Activated CD8-positive, alpha-beta T cell treated with anti-CD3 and anti-CD28 coated beads, Interleukin-2, amount 10 ng/mL, durations not matched to agents 7 days and 5 days (primary cell): ENCODE measurements at regions of chr5 and their contacts with region 1.

Region 1: DNA sequence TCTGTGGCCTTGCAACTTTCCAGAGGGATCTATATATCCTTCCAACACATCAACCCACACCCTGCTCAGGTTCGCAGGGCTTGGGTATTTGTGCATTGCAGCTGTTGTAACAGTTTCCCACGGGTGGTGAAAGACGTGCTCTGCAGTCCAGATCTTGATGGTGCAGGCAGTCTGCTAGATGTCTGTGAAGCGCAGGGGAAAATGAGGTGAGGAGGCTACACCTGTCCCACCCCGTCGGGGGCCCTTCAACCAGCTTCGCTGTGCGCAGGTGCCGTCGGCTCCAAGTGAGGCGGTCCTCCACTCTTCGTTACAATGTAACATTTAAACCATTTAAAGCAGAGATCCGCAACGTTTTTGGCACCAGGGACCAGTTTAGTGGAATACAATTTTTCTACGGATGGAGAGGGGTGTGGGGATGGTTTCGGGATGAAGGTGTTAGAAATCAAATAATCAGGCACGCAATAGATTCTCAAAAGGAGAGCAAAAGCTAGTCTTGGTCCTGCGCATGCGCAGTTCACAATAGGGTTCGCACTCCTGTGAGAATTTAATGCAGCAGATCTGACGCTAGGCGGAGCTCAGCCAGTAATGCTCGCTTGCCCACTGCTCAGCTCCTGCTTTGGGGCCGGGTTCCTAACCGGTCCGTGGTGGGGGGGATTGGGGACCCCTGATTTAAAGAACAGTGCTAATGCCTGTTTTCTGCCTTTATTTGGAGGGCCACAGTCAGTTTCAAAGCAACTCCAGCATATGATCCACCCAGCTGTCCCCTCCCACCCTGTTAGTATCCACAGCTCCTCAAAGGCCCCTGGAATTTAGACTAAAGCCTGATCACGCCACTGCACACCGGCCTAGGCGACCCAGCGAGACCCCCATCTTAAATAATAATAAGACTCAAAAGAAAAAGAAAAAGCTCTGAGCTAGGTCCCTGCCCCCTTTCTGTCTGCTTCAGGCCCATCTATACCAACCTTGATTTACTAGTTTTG is 97.1 kb upstream of the SELENOP start:
- DNase-seq: peak; percentile 95
- ATAC-seq: peak; percentile 94
- H3K4me3 Mint-ChIP-seq: peak overlapping the region; percentile 89
- H3K27ac Mint-ChIP-seq: peak overlapping the region; percentile 82
- H3K4me1 Mint-ChIP-seq: peaks cover 18% of the 10 kb centered on the region
- H3K27me3 Mint-ChIP-seq: peaks cover 28% of the 10 kb centered on the region

Region 2: DNA sequence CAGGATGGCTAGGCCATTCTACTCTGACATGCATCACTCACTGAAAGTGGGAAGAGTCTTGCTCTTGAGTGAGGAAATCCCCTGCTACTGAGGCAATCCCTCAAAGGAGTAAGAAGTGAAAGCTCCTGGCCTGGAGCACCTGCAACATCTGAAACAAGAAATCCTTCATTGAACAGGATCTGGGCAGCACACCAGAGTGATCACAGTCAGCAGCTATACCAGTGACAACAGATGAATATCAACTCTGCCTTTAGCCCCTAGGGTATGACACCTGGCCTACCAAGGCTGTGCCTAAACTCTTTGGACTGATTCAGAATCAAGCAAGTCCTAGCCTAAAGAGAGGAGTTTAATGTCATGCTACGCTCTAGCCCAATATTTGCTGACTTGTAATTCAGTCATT is 308.4 kb before region 1 on chr5:
- CTCF ChIA-PET with region 1: no interaction called
- POLR2A ChIA-PET with region 1: no interaction called
- DNase-seq: no peak
- ATAC-seq: no peak
- H3K4me3 Mint-ChIP-seq: no peak overlapping the region
- H3K27ac Mint-ChIP-seq: no peak overlapping the region
- H3K4me1 Mint-ChIP-seq: no peaks in the 10 kb centered on the region
- H3K27me3 Mint-ChIP-seq: no peaks in the 10 kb centered on the region

Region 3: DNA sequence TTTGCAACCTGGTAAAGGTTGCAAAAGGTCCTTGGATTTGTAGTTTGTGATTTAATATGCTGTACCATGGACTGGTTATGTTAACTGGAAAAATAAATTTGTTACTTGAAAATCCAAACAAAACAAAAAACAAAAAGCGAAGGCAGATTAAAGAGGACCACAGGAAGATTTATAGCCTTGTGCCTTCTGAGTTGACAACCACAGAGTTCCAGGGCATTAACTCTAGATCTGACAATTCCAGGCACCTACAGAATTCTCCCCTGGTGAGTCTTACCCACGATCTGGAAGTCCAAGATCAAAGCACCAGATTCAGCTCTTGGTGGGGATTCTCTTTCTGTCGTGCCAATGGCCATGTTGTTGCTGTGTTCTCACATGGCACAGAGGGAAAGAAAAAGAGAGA is 10.8 kb after region 1 on chr5:
- CTCF ChIA-PET with region 1: interaction called, 12 read pairs
- POLR2A ChIA-PET with region 1: no interaction called
- DNase-seq: no peak
- ATAC-seq: no peak
- H3K4me3 Mint-ChIP-seq: no peak overlapping the region
- H3K27ac Mint-ChIP-seq: no peak overlapping the region
- H3K4me1 Mint-ChIP-seq: no peaks in the 10 kb centered on the region
- H3K27me3 Mint-ChIP-seq: peaks cover 1% of the 10 kb centered on the region

Region 4: DNA sequence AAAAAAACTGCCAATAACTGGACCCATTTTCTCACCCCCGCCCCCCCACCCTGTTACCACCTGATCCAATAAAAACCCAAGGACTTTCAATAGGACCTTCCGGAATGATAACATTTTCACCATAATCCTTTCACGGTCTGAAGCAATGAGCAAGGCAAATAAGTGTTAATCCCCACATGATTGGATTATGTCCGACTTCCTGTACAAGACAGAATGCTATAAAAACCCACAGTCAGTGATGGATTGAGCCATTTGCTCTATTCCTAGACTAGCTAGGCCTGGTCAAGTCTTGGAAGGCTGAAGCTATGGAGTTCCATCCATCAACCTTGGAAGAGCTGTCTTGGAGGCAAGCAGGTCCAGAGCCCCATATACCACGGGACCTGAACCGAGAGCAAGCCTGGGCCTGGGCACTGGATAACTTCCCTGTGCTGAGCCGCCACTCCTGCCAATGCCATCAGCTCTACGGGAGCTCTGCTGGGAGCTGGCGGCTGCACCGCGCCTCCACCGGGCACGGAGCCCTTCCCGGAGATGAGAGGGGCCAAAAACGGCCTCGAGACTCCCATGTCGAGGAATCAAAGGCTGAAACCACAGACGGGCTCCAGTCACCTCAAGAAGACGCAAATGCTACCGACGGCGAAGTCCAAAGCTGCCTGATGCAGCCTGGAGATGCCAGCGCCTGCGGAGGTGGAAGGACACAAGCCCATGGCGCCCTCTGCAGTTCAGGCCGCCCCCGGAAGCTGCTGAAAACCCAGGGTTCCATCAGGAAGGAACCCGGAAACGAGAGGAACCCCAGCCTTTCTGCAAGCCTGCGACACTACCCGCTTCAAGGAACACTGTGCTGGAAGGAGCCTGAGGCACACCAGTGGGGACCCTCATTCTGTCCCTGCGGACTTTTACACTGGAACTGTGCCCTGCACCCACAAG is 62.1 kb after region 1 on chr5:
- CTCF ChIA-PET with region 1: interaction called, 12 read pairs
- POLR2A ChIA-PET with region 1: no interaction called
- DNase-seq: no peak
- ATAC-seq: no peak
- H3K4me3 Mint-ChIP-seq: no peak overlapping the region
- H3K27ac Mint-ChIP-seq: no peak overlapping the region
- H3K4me1 Mint-ChIP-seq: peaks cover 10% of the 10 kb centered on the region
- H3K27me3 Mint-ChIP-seq: no peaks in the 10 kb centered on the region

Region 5: DNA sequence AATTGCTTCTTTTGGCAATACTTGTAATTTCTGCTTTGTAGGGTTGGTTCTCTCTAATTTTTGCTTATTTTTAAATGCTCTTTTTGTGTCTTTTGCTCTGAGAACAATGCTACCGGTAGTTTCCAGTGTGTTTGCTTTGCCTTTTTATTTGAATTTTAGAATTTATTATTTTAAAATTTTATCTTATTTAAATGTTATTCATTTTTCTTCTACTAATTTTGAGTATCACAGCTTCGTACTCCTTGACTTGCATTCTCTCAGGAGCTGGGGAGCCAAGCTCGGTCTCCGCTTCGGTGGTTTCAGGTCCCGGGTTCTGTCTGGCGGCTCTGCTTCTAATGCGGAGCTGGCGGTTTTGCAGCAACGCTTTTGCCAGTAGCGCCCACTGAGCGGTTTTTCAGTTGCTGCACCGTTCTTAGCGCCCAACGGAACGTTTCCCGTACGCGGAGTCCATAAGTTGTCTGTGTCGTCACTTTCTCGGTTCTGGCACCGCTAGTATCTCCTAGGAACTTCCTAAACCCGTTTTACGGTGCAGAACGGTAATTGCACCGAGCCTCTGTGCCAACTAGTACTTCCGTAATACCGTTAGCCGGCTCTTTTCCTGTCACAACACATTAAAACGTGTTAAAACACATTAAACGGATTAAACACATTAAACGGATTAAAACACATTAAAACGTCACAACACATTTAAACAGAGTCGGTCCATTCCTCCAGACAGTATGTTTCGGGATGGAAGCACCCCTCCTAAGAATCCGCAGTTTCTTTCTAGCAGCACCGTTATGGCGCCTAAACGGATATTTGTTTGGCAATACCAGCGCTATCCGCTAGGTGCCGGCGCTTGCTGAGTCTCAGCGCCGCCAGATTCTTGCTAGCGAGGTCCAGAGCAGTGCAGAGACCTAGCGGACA is 85.7 kb after region 1 on chr5:
- CTCF ChIA-PET with region 1: interaction called, 17 read pairs
- POLR2A ChIA-PET with region 1: interaction called, 13 read pairs
- DNase-seq: peak; percentile 94
- ATAC-seq: peak; percentile 60
- H3K4me3 Mint-ChIP-seq: peak overlapping the region; percentile 94
- H3K27ac Mint-ChIP-seq: peak overlapping the region; percentile 99
- H3K4me1 Mint-ChIP-seq: peaks cover 19% of the 10 kb centered on the region
- H3K27me3 Mint-ChIP-seq: no peaks in the 10 kb centered on the region

Region 6: DNA sequence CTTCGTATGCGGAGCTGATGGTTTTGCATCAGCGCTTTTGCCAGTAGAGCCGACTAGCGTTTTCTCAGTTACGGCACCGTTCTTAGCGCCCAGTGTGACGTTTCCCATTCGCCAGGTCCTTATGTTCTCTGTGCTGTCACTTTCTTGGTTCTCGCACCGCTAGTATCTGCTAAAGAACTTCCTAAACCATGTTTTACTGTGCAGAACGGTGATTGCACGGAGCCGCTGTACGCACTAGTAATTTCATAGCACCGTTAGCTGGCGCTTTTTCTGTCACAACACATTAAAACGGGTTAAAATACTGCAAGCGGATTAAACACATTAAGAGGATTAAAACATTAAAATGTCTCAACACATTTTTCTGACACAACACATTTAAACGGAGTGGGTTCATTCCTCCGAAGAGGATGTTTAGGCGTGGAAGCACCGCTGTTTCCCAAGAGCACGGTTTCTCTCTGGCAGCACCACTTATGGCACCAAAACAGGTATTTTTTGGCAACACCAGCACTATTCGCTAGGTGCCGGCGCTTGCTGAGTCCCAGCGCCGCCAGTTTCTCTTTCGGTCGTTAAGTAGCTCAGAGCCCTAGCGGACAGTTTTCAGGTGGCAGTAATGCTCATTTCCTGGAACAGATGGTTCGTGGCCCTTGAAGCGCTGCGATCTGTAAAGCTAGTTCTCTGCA is 111.0 kb after region 1 on chr5:
- CTCF ChIA-PET with region 1: interaction called, 22 read pairs
- POLR2A ChIA-PET with region 1: interaction called, 13 read pairs
- DNase-seq: peak; percentile 94
- ATAC-seq: peak; percentile 73
- H3K4me3 Mint-ChIP-seq: peak overlapping the region; percentile 95
- H3K27ac Mint-ChIP-seq: peak overlapping the region; percentile 99
- H3K4me1 Mint-ChIP-seq: peaks cover 36% of the 10 kb centered on the region
- H3K27me3 Mint-ChIP-seq: no peaks in the 10 kb centered on the region

Region 7: DNA sequence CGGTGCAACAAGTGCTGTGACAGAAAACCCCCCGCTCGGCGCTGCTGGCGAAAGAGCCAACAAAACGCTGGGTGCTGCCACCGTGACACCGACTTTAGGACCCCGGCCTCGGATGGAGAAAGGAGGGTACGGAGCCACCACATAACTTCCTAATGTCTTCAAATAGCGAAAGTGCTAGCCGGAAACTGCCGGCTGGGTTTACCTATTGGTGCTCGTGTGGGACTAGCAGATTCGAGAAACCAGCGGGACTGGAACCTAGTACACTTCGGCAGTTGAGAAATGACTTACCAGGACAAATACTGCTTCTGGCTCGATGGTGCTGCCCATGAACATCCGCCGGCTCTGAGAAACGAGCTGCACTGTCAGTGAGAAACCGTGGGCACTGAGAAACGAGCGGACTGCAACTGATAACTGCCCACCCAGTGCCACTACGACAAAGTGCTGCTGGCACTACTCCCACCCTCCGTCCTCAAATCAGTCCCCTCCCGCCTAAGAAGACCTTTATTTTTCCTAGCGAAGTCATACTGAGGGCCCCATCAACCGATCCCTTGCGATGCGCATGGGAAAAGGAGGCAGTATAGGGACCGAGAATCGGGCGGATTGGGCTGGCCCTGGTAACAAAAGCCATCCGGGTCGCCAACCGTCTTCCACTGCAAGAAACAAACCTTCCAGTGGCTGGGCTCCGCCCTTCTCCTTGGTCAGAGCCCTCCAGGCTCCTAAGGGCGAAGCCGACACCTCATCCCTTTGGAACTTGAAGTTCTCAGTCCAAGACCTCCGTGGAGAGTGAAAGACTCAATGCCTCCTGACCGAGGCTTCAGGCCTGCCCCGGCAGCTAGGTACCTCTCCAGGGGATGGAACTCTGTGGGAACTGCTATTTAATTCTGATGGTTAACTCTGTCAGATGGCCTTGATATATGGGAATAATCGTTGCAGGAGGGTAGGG is 158.3 kb after region 1 on chr5:
- CTCF ChIA-PET with region 1: interaction called, 22 read pairs
- POLR2A ChIA-PET with region 1: interaction called, 7 read pairs
- DNase-seq: peak; percentile 91
- ATAC-seq: peak; percentile 59
- H3K4me3 Mint-ChIP-seq: peak overlapping the region; percentile 94
- H3K27ac Mint-ChIP-seq: peak overlapping the region; percentile 99
- H3K4me1 Mint-ChIP-seq: peaks cover 43% of the 10 kb centered on the region
- H3K27me3 Mint-ChIP-seq: no peaks in the 10 kb centered on the region